ENCODE measurements at regions of chr3 and their contacts with region 1.

Region 1: DNA sequence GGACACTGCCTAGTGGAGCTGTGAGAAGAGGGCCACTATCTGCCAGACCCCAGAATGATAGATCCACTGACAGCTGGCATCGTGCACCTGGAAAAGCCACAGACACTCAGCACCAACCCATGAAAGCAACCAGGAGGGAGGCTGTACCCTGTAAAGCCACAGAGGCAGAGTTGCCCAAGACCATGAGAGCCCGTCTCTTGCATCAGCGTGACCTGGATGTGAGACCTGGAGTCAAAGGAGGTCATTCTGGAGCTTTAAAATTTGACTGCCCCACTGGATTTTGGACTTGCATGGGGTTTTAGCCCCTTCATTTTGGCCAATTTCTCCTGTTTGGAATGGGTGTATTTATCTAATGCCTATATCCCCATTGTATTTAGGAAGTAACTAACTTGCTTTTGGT is 83.5 kb upstream of the P3H2 start:
- DNase-seq: no peak
- H3K4me3 ChIP-seq: no peak overlapping the region
- H3K27ac ChIP-seq: no peak overlapping the region
- H3K4me1 ChIP-seq: no peaks in the 10 kb centered on the region
- H3K27me3 ChIP-seq: no peaks in the 10 kb centered on the region
- CTCF ChIP-seq: no peak
- POLR2A ChIP-seq: no peak

Region 2: GRCh38 chr3:189773041-189773451 is 431.2 kb before region 1 on chr3:
- intact Hi-C with region 1: no loop called
- DNase-seq: no peak
- H3K4me3 ChIP-seq: no peak overlapping the region
- H3K27ac ChIP-seq: no peak overlapping the region
- H3K4me1 ChIP-seq: peaks cover 20% of the 10 kb centered on the region
- H3K27me3 ChIP-seq: no peaks in the 10 kb centered on the region
- CTCF ChIP-seq: no peak
- POLR2A ChIP-seq: no peak

Region 3: GRCh38 chr3:189862390-189863023 is 341.7 kb before region 1 on chr3:
- intact Hi-C with region 1: no loop called
- DNase-seq: no peak
- H3K4me3 ChIP-seq: no peak overlapping the region
- H3K27ac ChIP-seq: no peak overlapping the region
- H3K4me1 ChIP-seq: peaks cover 8% of the 10 kb centered on the region
- H3K27me3 ChIP-seq: no peaks in the 10 kb centered on the region
- CTCF ChIP-seq: no peak
- POLR2A ChIP-seq: no peak

Region 4: DNA sequence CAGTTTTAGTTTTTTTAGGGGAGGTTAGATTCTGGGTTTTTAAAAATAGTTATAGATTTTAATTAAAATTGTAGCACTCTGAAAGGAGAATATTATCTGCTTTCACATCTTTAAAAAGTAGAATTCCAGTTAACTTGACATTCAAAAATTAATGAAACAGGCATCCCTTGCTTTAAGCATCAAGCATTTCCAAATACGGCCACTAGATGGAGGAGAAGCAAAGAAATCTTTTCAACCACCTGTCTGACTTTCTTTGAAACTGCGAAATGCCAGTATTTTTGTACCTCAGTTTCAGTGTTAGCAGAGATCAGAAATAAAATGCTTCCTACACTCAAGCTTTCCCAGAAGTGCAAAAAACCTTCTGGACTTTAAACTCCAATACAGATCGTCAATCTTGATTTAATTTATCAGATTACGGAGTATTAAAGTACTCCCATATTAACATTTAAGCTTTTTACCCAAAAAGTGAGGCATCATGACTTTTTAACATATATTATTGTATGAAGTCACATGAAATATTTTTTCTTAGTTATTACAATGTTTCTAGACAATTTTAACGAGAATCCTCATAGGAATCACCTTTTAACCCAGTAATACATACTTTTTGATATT is 236.8 kb before region 1 on chr3:
- intact Hi-C with region 1: loop called (anchors 5 kb)
- DNase-seq: no peak
- H3K4me3 ChIP-seq: no peak overlapping the region
- H3K27ac ChIP-seq: no peak overlapping the region
- H3K4me1 ChIP-seq: no peaks in the 10 kb centered on the region
- H3K27me3 ChIP-seq: no peaks in the 10 kb centered on the region
- CTCF ChIP-seq: peak; percentile 61 to 86 (median 79)
- POLR2A ChIP-seq: no peak

Region 5: GRCh38 chr3:190655933-190656332 is 451.7 kb after region 1 on chr3:
- intact Hi-C with region 1: no loop called
- DNase-seq: no peak
- H3K4me3 ChIP-seq: no peak overlapping the region
- H3K27ac ChIP-seq: no peak overlapping the region
- H3K4me1 ChIP-seq: no peaks in the 10 kb centered on the region
- H3K27me3 ChIP-seq: no peaks in the 10 kb centered on the region
- CTCF ChIP-seq: no peak
- POLR2A ChIP-seq: no peak

Measured in vagina (tissue), 2 donors.